ENCODE measurements at regions of chr7 and their contacts with region 1.

Region 1: GRCh38 chr7:43925984-43926797 is at the start of gene UBE2D4:
- DNase-seq: peak; percentile 92 to 94
- H3K4me3 ChIP-seq: peak within 1 kb of the TSS; percentile 68
- H3K4me3 Mint-ChIP-seq: peak within 1 kb of the TSS; percentile 84
- H3K27ac Mint-ChIP-seq: peak within 1 kb of the TSS; percentile 69
- H3K4me1 ChIP-seq: no peaks in the 10 kb centered on the region
- H3K4me1 Mint-ChIP-seq: no peaks in the 10 kb centered on the region
- H3K27me3 ChIP-seq: no peaks in the 10 kb centered on the region
- H3K27me3 Mint-ChIP-seq: no peaks in the 10 kb centered on the region
- CTCF ChIP-seq: no peak
- total RNA-seq, gene UBE2D4: 12.7 and 15.4 TPM in 2 replicates

Region 2: GRCh38 chr7:43869006-43869866 is 57.0 kb before region 1 on chr7 and contains the start of gene MRPS24:
- CTCF ChIA-PET with region 1: no interaction called
- POLR2A ChIA-PET with region 1: interaction called, 5 read pairs
- intact Hi-C with region 1: loop called (anchors 1 kb)
- DNase-seq: peak; percentile 94 to 96
- H3K4me3 ChIP-seq: peak within 1 kb of the TSS; percentile 97
- H3K4me3 Mint-ChIP-seq: peak within 1 kb of the TSS; percentile 92
- H3K27ac Mint-ChIP-seq: peak within 1 kb of the TSS; percentile 87
- H3K4me1 ChIP-seq: peaks cover 13% of the 10 kb centered on the region
- H3K4me1 Mint-ChIP-seq: peaks cover 21% of the 10 kb centered on the region
- H3K27me3 ChIP-seq: no peaks in the 10 kb centered on the region
- H3K27me3 Mint-ChIP-seq: no peaks in the 10 kb centered on the region
- CTCF ChIP-seq: no peak
- total RNA-seq, gene MRPS24: 143 and 150 TPM in 2 replicates